HEK293T (cell line): ENCODE measurements at regions of chr3 and their contacts with region 1.

Region 1: GRCh38 chr3:101665851-101666250 is 11.1 kb downstream of the ZBTB11 start:
- DNase-seq: no peak

Region 2: DNA sequence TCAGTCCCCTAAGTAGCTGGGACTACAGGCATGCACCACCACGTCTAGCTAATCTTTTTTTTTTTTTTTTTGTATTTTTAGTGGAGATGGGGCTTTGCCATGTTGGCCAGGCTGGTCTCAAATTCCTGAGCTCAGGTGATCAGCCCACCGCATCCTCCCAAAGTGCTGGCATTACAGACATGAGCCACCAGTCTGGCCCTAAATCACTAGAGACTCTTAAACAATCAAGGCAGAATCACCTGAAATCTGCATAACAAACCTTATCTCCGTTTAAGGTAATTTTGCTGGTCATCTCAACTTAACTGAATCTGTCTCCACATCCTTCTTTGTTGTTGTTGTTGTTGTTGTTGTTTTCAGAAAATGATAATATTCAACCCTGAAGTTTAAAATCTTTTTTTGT is 109.8 kb before region 1 on chr3:
- CTCF ChIA-PET with region 1: no interaction called
- POLR2A ChIA-PET with region 1: no interaction called
- DNase-seq: no peak

Region 3: DNA sequence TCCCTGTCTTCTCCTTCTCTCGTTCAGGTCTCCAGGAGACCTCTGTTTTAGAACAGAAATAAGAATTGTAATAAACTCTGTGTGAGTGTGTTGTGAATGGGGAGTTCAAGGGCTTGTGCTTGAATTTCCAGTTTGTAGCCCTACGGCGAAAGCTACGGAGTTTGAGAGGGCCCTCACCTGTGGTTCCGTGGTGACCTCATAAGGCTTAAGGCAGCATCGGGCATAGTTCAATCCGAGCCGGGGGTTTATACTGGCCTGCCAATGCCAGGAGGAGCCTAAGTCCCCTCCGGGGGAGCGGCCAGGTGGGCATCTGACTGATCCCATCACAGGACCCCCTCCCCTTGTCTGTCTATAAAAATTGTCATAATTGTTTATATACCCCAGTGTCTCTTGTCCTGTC is 32.7 kb before region 1 on chr3:
- CTCF ChIA-PET with region 1: no interaction called
- POLR2A ChIA-PET with region 1: no interaction called
- DNase-seq: no peak

Region 4: GRCh38 chr3:101676765-101677435 is 11.0 kb after region 1 on chr3 and contains the start of gene ZBTB11:
- CTCF ChIA-PET with region 1: no interaction called
- POLR2A ChIA-PET with region 1: interaction called, 17 read pairs
- DNase-seq: peak; percentile 94